Right ventricle myocardium inferior (tissue), 1 donor: ENCODE measurements at regions of chr1 and their contacts with region 1.

Region 1: DNA sequence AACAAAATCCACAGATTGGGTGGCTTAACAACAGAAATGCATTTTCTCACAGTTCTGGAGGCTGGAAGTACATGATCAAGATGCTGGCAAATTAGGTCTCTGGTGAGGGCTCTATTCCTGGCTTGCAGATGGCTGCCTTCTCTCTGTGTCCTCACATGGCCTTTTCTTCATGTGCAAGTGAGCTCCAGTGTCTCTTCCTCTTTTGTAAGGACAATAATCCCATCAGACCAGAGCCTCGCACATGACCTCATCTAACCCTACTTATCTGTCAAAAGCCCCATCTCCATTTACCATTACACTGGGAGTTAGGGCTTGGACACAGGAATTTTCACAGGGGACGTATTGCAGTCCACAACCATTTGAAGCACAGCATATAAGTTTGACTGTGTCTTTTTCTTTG is 181.6 kb downstream of the NEGR1 start:
- DNase-seq: no peak
- ATAC-seq: no peak

Region 2: GRCh38 chr1:71850936-71851335 is 249.8 kb before region 1 on chr1:
- intact Hi-C with region 1: loop called (anchors 10 kb)
- DNase-seq: no peak
- ATAC-seq: peak; percentile 90

Region 3: DNA sequence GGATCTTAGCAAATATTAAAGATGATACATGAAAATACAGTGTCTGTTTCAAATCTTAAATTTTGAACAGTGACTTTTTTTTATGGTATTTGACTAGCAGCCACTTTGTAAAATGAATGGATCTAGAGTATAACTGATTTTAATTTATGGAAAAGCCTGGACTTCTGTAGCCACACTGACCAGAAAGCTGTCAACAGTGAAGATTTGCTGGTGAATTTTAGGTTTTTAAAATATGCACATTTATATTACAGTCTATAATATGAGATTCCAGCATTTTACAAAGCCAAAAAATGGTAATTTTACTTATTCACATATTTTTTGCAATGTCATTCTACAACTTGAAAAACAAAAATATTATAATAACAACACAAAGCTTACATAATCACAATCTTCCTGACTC is 49.7 kb after region 1 on chr1:
- intact Hi-C with region 1: no loop called
- DNase-seq: no peak
- ATAC-seq: no peak

Region 4: DNA sequence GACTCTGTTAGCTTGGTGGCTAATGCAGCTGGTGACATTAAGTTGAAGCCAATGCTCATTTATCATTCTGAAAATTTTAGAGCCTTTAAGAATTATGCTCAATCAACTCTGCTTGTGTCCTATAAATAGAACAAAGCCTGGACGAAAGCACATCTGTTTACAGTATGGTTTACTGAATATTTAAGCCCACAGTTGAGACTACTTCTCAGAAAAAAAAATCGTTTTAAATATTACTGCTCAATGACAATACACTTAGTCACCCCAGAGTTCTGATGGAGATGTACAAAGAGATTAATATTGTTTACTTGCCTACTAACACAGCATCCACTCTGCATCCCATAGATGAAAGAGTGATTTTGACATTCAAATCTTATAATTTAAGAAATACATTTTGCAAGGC is 102.0 kb after region 1 on chr1:
- intact Hi-C with region 1: no loop called
- DNase-seq: no peak
- ATAC-seq: no peak